ENCODE measurements at regions of chr12 and their contacts with region 1.

Region 1: DNA sequence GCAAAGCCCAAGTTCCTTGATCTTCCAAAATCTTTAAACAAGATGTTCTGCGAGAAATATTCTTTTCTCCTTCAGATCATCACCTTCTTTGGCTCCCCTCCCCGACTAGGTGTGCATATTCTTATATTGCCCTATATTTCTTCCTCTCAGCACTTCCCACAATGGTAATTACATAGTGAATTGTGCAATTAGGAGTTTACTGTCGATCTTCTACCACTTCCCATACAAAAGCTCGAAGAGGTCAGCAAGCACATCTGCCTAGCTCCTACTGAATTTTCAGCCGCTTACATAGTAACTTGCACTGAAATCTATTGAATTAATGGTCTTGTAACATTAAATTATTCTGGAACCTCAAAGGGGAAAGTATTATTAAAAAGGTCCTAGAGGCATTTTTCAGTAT is 16.7 kb downstream of the OSBPL8 start:
- DNase-seq: no peak
- ATAC-seq: no peak
- H3K4me3 ChIP-seq: no peak overlapping the region
- H3K27ac ChIP-seq: no peak overlapping the region
- H3K4me1 ChIP-seq: peaks cover 1% of the 10 kb centered on the region
- H3K27me3 ChIP-seq: no peaks in the 10 kb centered on the region
- CTCF ChIP-seq: no peak
- POLR2A ChIP-seq: no peak
- RAD21 ChIP-seq: no peak

Region 2: GRCh38 chr12:76504606-76505005 is 38.3 kb before region 1 on chr12:
- CTCF ChIA-PET with region 1: no interaction called
- POLR2A ChIA-PET with region 1: interaction called, 3 read pairs
- dilution Hi-C with region 1: no loop called
- in situ Hi-C with region 1: no loop called
- intact Hi-C with region 1: loop called (anchors 2 kb)
- DNase-seq: no peak
- ATAC-seq: no peak
- H3K4me3 ChIP-seq: no peak overlapping the region
- H3K27ac ChIP-seq: no peak overlapping the region
- H3K4me1 ChIP-seq: peaks cover 2% of the 10 kb centered on the region; the same call in 1 of the 2 replicates
- H3K27me3 ChIP-seq: no peaks in the 10 kb centered on the region
- CTCF ChIP-seq: no peak
- POLR2A ChIP-seq: no peak
- RAD21 ChIP-seq: no peak